Left colon (tissue), 2 donors: ENCODE measurements at regions of chr4 and their contacts with region 1.

Region 1: DNA sequence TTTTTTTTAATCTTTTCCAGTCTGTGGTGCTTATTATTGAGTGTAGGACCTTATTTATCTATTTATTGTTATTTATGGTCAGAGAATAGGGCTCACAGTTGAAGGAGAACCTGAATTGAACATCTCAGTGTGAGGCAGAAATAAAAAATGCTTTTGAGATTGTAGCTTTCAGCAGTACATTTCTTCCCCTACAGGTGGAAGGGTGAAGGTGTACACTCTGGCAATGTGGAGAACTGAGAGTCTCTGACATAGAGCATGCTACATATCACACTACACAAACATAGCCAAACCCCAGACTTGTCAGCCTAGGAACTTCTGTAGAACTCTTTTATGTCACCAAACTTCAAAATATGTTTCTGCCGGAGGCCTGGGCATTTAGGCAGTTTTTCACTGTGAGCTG is 140.2 kb downstream of the STIM2 start:
- DNase-seq: no peak
- ATAC-seq: peak; percentile 70

Region 2: DNA sequence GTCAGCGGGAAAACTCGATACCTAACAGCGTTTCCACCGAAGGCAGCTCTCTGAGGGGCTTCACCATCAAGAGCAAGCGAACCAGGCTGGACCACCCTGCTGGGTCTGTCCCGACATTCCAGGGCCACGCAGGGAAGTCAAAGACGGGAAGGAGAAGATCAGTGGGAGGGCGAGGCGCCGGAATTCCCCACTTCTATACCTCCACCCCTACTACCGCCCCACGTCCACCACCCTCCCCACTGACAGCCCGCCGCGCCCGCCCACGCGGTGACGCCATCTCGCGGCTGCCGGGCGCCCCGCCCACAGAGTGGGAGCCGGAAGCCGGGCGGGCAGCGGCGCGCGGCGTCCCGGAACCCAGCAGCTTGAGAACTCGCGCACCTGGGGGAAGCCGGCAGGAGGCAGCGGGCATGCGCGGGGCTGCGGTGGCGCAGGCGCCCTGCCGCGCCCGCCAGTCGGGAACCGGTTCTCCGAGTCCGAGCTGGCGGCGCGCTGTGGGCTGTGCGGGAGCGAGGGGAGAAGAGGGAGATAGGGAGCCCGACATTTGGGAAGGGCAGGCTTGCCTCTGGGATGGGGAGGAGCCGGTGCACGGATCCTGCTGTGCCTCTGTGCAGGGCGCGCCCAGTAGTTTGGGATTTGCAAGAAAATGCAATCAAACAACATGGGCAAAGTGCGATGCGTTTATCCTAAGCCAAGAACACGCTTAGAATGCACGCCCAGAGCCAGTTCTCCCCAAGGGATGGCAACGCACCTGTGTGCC is 143.4 kb before region 1 on chr4:
- intact Hi-C with region 1: loop called in 1 of 2 experiments (anchors 5 kb)
- DNase-seq: peak; percentile 91
- ATAC-seq: peak; percentile 77

Region 3: GRCh38 chr4:26916195-26916594 is 84.6 kb before region 1 on chr4:
- intact Hi-C with region 1: no loop called
- DNase-seq: no peak
- ATAC-seq: no peak